Psoas muscle (tissue), 8 donors: ENCODE measurements at regions of chr6 and their contacts with region 1.

Region 1: GRCh38 chr6:152089992-152090391 is 282.5 kb downstream of the ESR1 start:
- DNase-seq: peak; percentile 57 to 66
- ATAC-seq: peak; percentile 60 to 77 (median 72)
- H3K4me3 ChIP-seq: no peak overlapping the region
- H3K27ac ChIP-seq: no peak overlapping the region
- H3K4me1 ChIP-seq: peaks cover 34% of the 10 kb centered on the region
- H3K27me3 ChIP-seq: no peaks in the 10 kb centered on the region
- CTCF ChIP-seq: no peak

Region 2: DNA sequence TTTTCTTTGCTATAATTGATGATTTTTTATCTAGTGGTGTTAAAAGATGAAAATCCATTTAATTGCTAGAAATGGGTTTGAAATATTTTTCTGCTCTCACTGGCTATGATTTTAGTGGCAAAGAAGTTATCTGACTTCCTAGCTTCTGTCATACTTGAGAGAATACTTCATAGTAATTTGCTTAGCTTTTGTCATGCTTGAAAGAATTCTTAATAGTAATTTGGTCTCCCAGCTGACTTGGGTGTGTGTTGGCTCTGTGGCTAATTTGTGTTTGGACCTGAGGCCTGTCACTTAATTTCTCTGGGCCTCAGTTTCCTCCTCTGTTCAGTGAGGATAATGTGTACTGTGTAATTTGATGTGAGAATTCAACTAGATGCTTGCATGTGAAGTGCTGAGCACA is 625.3 kb before region 1 on chr6:
- intact Hi-C with region 1: loop called in 1 of 2 experiments (anchors 5 kb)
- DNase-seq: no peak
- ATAC-seq: no peak
- H3K4me3 ChIP-seq: no peak overlapping the region
- H3K27ac ChIP-seq: no peak overlapping the region
- H3K4me1 ChIP-seq: no peaks in the 10 kb centered on the region
- H3K27me3 ChIP-seq: no peaks in the 10 kb centered on the region
- CTCF ChIP-seq: no peak

Region 3: DNA sequence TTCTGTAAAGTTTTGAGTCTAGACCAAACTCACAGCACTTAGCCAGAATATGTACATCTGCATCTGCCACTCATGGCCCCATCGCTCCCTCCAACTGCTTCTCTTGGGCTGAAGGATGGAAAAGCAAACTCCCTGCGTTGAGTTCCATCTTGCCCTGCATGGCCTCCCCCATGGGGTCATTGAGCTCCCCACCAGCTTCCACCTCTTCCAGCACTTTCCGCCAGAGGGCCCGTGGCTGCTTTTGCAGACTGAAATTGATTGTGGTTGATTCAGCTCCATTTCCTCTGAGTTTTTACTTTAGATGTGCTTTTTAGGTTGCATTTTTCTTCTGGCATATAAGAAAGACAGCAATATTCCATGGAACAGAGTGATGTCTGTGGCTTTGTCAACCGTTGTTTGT is 19.4 kb before region 1 on chr6:
- intact Hi-C with region 1: loop called in 1 of 2 experiments (anchors 2 kb)
- DNase-seq: no peak
- ATAC-seq: no peak
- H3K4me3 ChIP-seq: no peak overlapping the region
- H3K27ac ChIP-seq: peak overlapping the region; percentile 63
- H3K4me1 ChIP-seq: peaks cover 18% of the 10 kb centered on the region
- H3K27me3 ChIP-seq: no peaks in the 10 kb centered on the region
- CTCF ChIP-seq: no peak